ENCODE measurements at regions of chr4 and their contacts with region 1.

Region 1: DNA sequence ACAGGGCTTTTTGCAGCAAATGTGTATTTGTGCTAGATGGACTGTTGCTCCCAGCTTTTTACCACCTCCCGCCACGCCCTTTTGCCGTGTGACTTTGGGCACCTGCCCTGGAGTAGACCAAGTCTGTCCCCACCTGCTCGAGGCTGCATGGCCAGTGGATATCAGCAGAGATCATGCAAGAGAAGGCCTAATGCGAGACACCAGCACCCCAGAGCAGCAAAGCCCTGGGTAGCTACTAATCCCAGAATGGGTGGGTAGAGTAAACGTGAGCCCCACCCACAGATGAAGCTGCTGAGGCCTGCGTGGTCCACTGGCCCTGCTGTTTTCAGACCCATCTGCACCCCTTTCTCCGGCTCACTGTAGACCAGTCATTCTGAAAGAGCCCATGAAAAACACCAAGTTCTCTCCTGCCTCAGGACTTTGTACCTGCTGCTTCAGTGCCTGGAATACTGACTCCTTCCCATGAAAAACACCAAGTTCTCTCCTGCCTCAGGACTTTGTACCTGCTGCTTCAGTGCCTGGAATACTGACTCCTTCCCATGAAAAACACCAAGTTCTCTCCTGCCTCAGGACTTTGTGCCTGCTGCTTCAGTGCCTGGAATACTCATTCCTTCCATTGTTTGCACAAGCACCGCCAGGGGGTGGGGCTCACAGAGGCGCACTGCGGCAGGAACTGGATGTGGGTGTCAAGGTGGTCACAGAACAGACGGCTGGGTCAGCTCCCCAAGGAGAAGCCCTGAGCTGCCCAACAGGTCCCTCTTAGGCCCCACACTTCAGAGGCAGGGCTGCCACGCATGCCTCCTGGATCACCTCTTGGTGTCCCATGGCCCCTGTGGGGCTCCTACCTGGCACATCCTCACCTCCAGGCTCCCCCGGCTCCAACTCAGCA is 5.1 kb upstream of the TNIP2 start:
- DNase-seq: peak in 1 of 3 donors; percentile 33
- H3K4me3 ChIP-seq: no peak overlapping the region
- H3K4me3 Mint-ChIP-seq: no peak overlapping the region
- H3K27ac ChIP-seq: no peak overlapping the region
- H3K27ac Mint-ChIP-seq: peak overlapping the region in 1 of 7 donors; percentile 28
- H3K4me1 ChIP-seq: peaks cover 11 to 28% of the 10 kb centered on the region in 2 donors
- H3K4me1 Mint-ChIP-seq: peaks cover 35% of the 10 kb centered on the region
- H3K27me3 ChIP-seq: no peaks in the 10 kb centered on the region
- H3K27me3 Mint-ChIP-seq: peaks cover 2 to 17% (median 13%) of the 10 kb centered on the region in 3 donors
- CTCF ChIP-seq: no peak

Region 2: GRCh38 chr4:2811830-2812611 is 50.7 kb after region 1 on chr4:
- intact Hi-C with region 1: loop called (anchors 5 kb)
- DNase-seq: peak; percentile 88 to 91 (median 88)
- H3K4me3 ChIP-seq: peak overlapping the region; percentile 52 to 84 (median 53)
- H3K4me3 Mint-ChIP-seq: peak overlapping the region; percentile 87 to 90
- H3K27ac ChIP-seq: peak overlapping the region; percentile 79 to 81
- H3K27ac Mint-ChIP-seq: peak overlapping the region; percentile 92 to 97 (median 94)
- H3K4me1 ChIP-seq: peaks cover 94 to 96% of the 10 kb centered on the region in 2 donors
- H3K4me1 Mint-ChIP-seq: peaks cover 90% of the 10 kb centered on the region
- H3K27me3 ChIP-seq: no peaks in the 10 kb centered on the region
- H3K27me3 Mint-ChIP-seq: peaks cover 0 to 3% (median 2%) of the 10 kb centered on the region in 3 donors
- CTCF ChIP-seq: no peak

Region 3: GRCh38 chr4:2837904-2838496 is 76.7 kb after region 1 on chr4:
- intact Hi-C with region 1: loop called (anchors 5 kb)
- DNase-seq: peak; percentile 67 to 72 (median 70)
- H3K4me3 ChIP-seq: peak overlapping the region in 1 of 3 experiments; percentile 48
- H3K4me3 Mint-ChIP-seq: peak overlapping the region in 1 of 2 donors; percentile 62
- H3K27ac ChIP-seq: peak overlapping the region; percentile 69 to 73
- H3K27ac Mint-ChIP-seq: peak overlapping the region; percentile 76 to 94 (median 89)
- H3K4me1 ChIP-seq: peaks cover 64 to 72% of the 10 kb centered on the region in 2 donors
- H3K4me1 Mint-ChIP-seq: peaks cover 71% of the 10 kb centered on the region
- H3K27me3 ChIP-seq: no peaks in the 10 kb centered on the region
- H3K27me3 Mint-ChIP-seq: peaks cover 0 to 2% (median 0%) of the 10 kb centered on the region in 3 donors
- CTCF ChIP-seq: no peak

Region 4: GRCh38 chr4:3047464-3048286 is 286.4 kb after region 1 on chr4:
- intact Hi-C with region 1: no loop called
- DNase-seq: peak; percentile 68 to 81 (median 78)
- H3K4me3 ChIP-seq: peak overlapping the region; percentile 6 to 61 (median 27)
- H3K4me3 Mint-ChIP-seq: peak overlapping the region; percentile 60 to 78
- H3K27ac ChIP-seq: peak overlapping the region in 1 of 2 donors; percentile 71
- H3K27ac Mint-ChIP-seq: peak overlapping the region; percentile 70 to 95 (median 86)
- H3K4me1 ChIP-seq: peaks cover 22 to 44% of the 10 kb centered on the region in 2 donors
- H3K4me1 Mint-ChIP-seq: peaks cover 35% of the 10 kb centered on the region
- H3K27me3 ChIP-seq: no peaks in the 10 kb centered on the region
- H3K27me3 Mint-ChIP-seq: peaks cover 0 to 5% (median 2%) of the 10 kb centered on the region in 3 donors
- CTCF ChIP-seq: peak; percentile 84